Dorsolateral prefrontal cortex (tissue), 120 donors: ENCODE measurements at regions of chr3 and their contacts with region 1.

Region 1: DNA sequence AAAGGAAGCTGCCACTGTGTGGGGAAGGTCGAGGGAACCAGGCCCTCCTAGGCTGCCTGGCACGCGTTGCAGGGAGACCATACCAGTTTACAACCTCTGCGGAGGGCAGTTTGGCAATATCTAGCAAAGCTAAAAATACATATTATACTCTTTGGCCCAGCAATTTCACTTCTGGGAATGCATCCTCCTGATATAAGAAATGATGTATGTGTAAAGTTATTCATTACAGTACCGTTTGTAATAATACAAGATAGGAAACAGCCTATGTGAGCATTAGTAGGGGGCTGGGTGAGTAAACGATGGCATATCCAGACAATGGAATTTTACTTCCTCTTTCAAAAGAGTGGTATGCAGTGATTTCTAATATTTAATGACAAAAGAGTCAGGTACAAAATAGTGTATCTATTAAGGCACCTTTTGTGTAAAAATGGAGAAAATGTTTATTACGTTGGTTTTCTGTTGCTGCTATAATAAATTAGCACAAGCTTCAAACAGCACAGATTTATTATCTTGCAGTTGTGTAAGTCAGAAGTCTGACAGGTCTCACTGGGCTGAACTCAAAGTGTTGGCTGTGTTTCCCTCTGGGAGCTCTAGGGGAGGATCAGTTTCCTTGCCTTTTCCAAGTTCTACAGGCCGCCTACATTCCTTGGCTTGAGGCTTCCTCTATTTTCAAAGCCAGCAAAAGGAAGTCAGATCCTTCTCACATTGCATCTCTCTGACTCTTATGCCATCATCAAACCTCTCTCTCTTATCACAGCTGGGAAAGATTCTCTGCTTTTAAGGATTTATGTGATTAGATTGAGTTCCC is 9.0 kb downstream of the APOD start:
- DNase-seq: no peak
- H3K4me3 ChIP-seq: peak overlapping the region in 2 of 59 donors; percentile 7 to 12
- H3K27ac ChIP-seq: peak overlapping the region in 31 of 59 donors; percentile 5 to 77 (median 43)
- H3K27me3 ChIP-seq: no peaks in the 10 kb centered on the region
- CTCF ChIP-seq: no peak

Region 2: GRCh38 chr3:195542698-195543499 is 31.8 kb before region 1 on chr3 and contains the start of gene PPP1R2:
- intact Hi-C with region 1: loop called in 1 of 2 experiments (anchors 5 kb)
- DNase-seq: peak; percentile 81 to 95 (median 92)
- H3K4me3 ChIP-seq: peak within 1 kb of the TSS; percentile 59 to 100 (median 88)
- H3K27ac ChIP-seq: peak within 1 kb of the TSS in 58 of 59 donors; percentile 19 to 92 (median 81)
- H3K27me3 ChIP-seq: no peaks in the 10 kb centered on the region
- CTCF ChIP-seq: peak in 23 of 56 donors; percentile 6 to 47 (median 24)
- total RNA-seq, gene PPP1R2: 25.2 to 68.8 (median 47.3) TPM